Activated T-helper 2 cell treated with anti-CD3 and anti-CD28 coated beads, Interferon-gamma antibody, Interleukin-2, Interleukin-4, amounts not matched to agents 10 μg/mL and 5 μg/mL and 100 μg/mL, durations not matched to agents 14 hours and 24 hours and 36 hours (primary cell): ENCODE measurements at regions of chr18 and their contacts with region 1.

Region 1: GRCh38 chr18:77650799-77651385 is 401.2 kb downstream of the GALR1 start:
- DNase-seq: peak; percentile 43
- H3K4me3 Mint-ChIP-seq: no peak overlapping the region
- H3K27ac Mint-ChIP-seq: no peak overlapping the region
- H3K4me1 Mint-ChIP-seq: peaks cover 3% of the 10 kb centered on the region
- H3K27me3 Mint-ChIP-seq: peaks cover 2% of the 10 kb centered on the region

Region 2: DNA sequence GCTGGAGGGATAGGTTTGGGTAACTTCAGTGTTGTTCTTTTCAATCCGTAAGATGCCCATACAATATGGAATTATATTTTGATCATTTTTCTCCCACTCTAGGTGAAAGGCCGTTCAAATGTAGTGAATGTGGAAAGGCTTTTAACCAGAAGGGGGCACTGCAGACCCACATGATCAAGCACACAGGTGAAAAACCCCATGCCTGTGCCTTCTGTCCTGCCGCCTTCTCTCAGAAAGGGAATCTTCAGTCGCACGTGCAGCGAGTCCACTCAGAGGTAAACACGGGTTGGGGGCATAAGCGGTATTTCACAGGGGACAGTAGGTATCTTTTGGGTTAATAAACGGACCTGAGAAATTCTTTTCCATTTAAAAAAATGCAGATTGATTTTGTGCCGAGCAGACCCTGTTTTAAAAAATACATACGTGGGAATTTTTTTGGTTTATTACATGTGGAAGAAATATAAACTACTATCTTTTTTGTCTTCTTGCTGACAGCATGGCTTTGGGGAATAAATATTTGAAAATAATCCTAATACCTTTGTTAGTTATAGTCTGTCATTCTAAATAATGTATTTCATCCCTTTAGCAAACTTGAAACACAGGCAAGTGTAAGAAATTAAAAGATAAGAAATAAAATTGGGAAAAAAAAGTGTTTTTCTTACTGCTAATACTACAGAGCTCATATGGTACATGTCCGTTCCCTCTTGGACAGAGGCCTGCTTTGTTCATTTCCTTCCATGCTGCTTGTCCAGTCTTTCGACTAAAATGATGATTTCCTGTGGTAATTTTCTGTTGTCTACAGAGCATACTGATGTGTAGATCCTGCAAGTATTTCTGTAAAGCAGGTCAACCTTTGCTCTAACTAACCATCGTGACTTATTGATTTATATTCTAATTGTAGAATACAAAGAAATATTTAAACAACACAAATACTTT is 775.2 kb before region 1 on chr18:
- intact Hi-C with region 1: loop called (anchors 5 kb)
- DNase-seq: peak; percentile 22
- H3K4me3 Mint-ChIP-seq: no peak overlapping the region
- H3K27ac Mint-ChIP-seq: peak overlapping the region; percentile 85
- H3K4me1 Mint-ChIP-seq: peaks cover 14% of the 10 kb centered on the region
- H3K27me3 Mint-ChIP-seq: no peaks in the 10 kb centered on the region

Region 3: GRCh38 chr18:76922107-76922506 is 728.8 kb before region 1 on chr18:
- intact Hi-C with region 1: loop called (anchors 5 kb)
- DNase-seq: peak; percentile 53
- H3K4me3 Mint-ChIP-seq: no peak overlapping the region
- H3K27ac Mint-ChIP-seq: no peak overlapping the region
- H3K4me1 Mint-ChIP-seq: peaks cover 21% of the 10 kb centered on the region
- H3K27me3 Mint-ChIP-seq: no peaks in the 10 kb centered on the region

Region 4: GRCh38 chr18:77000527-77000926 is 650.4 kb before region 1 on chr18:
- intact Hi-C with region 1: loop called (anchors 5 kb)
- DNase-seq: no peak
- H3K4me3 Mint-ChIP-seq: no peak overlapping the region
- H3K27ac Mint-ChIP-seq: no peak overlapping the region
- H3K4me1 Mint-ChIP-seq: peaks cover 32% of the 10 kb centered on the region
- H3K27me3 Mint-ChIP-seq: peaks cover 3% of the 10 kb centered on the region

Region 5: DNA sequence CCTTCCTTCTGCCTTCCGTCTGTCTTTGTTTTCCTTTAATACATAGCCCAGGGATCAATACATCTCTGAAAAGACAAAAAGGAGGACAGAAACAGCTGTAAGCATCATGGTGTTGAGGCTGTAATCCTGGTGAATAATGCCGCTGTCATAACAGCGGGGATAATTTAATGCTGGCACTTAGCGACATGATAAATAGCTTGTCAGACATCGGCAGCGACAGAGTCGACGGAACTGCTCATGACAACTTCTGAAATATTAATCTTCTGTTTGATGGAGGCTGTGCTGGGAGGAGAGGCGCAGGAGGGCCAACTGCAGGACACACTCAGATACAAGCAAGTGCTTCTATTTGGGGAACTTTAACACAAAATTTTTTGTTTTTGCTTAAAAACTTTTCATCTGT is 200.9 kb after region 1 on chr18:
- intact Hi-C with region 1: no loop called
- DNase-seq: no peak
- H3K4me3 Mint-ChIP-seq: no peak overlapping the region
- H3K27ac Mint-ChIP-seq: no peak overlapping the region
- H3K4me1 Mint-ChIP-seq: no peaks in the 10 kb centered on the region
- H3K27me3 Mint-ChIP-seq: no peaks in the 10 kb centered on the region